T-cell (primary cell): ENCODE measurements at regions of chr2 and their contacts with region 1.

Region 1: GRCh38 chr2:47751875-47752357 is 31.0 kb upstream of the MSH6 start:
- DNase-seq: no peak
- ATAC-seq: no peak
- H3K4me3 ChIP-seq: no peak overlapping the region
- H3K4me3 Mint-ChIP-seq: no peak overlapping the region
- H3K27ac ChIP-seq: peak overlapping the region; percentile 19
- H3K27ac Mint-ChIP-seq: peak overlapping the region in 1 of 2 donors; percentile 8
- H3K4me1 ChIP-seq: no peaks in the 10 kb centered on the region
- H3K4me1 Mint-ChIP-seq: peaks cover 0 to 6% (median 0%) of the 10 kb centered on the region in 3 donors
- H3K27me3 ChIP-seq: peaks cover 0 to 4% of the 10 kb centered on the region in 2 experiments
- H3K27me3 Mint-ChIP-seq: no peaks in the 10 kb centered on the region

Region 2: DNA sequence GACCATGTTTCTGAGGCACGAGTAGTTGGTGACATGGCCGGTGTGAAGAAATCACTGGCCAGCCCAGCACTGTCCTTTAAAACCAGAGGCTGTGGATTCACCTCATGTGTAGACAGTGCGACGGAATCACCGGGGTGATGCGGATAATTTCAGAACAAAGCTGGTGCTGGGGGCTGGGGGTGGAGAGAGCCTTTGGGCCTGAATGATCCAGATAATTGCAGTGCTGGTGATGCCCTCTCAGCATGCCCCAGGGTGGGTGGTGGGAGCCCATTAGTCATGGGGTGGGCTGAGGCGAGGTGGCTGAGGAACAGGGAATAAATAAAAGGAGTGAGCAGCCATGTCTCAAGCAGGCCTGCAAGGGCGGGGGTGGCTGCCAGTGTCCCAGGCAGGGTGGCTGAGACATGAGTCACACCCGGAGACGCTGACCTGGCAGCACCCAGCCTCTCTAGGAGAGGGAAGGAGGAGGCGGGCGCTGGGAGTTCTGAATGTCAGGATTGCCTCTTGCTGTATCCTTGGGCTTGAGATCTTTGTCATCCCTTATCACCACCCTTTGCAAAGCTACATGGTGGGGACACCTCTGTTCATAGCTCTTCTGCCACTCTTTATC is 120.0 kb before region 1 on chr2:
- CTCF ChIA-PET with region 1: no interaction called
- POLR2A ChIA-PET with region 1: no interaction called
- DNase-seq: no peak
- ATAC-seq: no peak
- H3K4me3 ChIP-seq: no peak overlapping the region
- H3K4me3 Mint-ChIP-seq: no peak overlapping the region
- H3K27ac ChIP-seq: no peak overlapping the region
- H3K27ac Mint-ChIP-seq: peak overlapping the region in 1 of 2 donors; percentile 43
- H3K4me1 ChIP-seq: no peaks in the 10 kb centered on the region
- H3K4me1 Mint-ChIP-seq: no peaks in the 10 kb centered on the region
- H3K27me3 ChIP-seq: peaks cover 0 to 6% of the 10 kb centered on the region in 2 experiments
- H3K27me3 Mint-ChIP-seq: peaks cover 0 to 11% of the 10 kb centered on the region in 2 donors

Region 3: GRCh38 chr2:47675196-47675825 is 76.6 kb before region 1 on chr2:
- CTCF ChIA-PET with region 1: no interaction called
- POLR2A ChIA-PET with region 1: interaction called in 1 of 2 experiments, 10 read pairs
- DNase-seq: no peak
- ATAC-seq: no peak
- H3K4me3 ChIP-seq: no peak overlapping the region
- H3K4me3 Mint-ChIP-seq: no peak overlapping the region
- H3K27ac ChIP-seq: no peak overlapping the region
- H3K27ac Mint-ChIP-seq: no peak overlapping the region
- H3K4me1 ChIP-seq: no peaks in the 10 kb centered on the region
- H3K4me1 Mint-ChIP-seq: no peaks in the 10 kb centered on the region
- H3K27me3 ChIP-seq: peaks cover 0 to 3% of the 10 kb centered on the region in 2 experiments
- H3K27me3 Mint-ChIP-seq: peaks cover 12 to 17% of the 10 kb centered on the region in 2 donors

Region 4: GRCh38 chr2:48283586-48284269 is 531.8 kb after region 1 on chr2:
- CTCF ChIA-PET with region 1: no interaction called
- POLR2A ChIA-PET with region 1: interaction called in 1 of 2 experiments, 10 read pairs
- DNase-seq: no peak
- ATAC-seq: no peak
- H3K4me3 ChIP-seq: no peak overlapping the region
- H3K4me3 Mint-ChIP-seq: no peak overlapping the region
- H3K27ac ChIP-seq: no peak overlapping the region
- H3K27ac Mint-ChIP-seq: no peak overlapping the region
- H3K4me1 ChIP-seq: no peaks in the 10 kb centered on the region
- H3K4me1 Mint-ChIP-seq: peaks cover 0 to 2% (median 0%) of the 10 kb centered on the region in 3 donors
- H3K27me3 ChIP-seq: no peaks in the 10 kb centered on the region
- H3K27me3 Mint-ChIP-seq: no peaks in the 10 kb centered on the region